Mammary epithelial cell (primary cell): ENCODE measurements at regions of chr10 and their contacts with region 1.

Region 1: GRCh38 chr10:104353325-104354048 is at the start of gene CFAP58:
- DNase-seq: peak; percentile 88
- H3K4me3 ChIP-seq: peak within 1 kb of the TSS; percentile 19 to 50 (median 45)
- H3K27ac ChIP-seq: no peak within 1 kb of the TSS
- H3K4me1 ChIP-seq: peaks cover 36% of the 10 kb centered on the region
- H3K27me3 ChIP-seq: no peaks in the 10 kb centered on the region
- CTCF ChIP-seq: peak; percentile 35 to 70
- total RNA-seq, gene CFAP58: 0.17 to 1.0 TPM

Region 2: DNA sequence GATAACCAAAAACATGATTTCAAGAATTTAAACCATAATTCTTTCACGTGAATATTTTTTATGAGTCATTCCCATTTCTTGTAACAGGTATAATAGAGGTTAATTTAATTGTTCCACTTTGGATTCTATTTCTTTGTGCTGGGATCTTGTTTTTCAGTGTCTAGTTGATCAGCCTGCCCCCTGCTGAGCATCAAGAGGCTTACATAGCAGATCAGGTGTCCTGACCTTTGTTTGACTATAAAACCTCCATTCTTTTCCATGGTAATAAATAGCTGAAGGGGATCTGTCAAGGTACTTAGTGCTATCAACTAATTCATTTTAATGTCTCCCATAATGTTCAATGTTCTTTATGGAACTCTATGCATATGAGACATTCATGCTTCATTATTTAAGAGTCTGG is 272.7 kb before region 1 on chr10:
- CTCF ChIA-PET with region 1: no interaction called
- dilution Hi-C with region 1: no loop called
- in situ Hi-C with region 1: no loop called
- intact Hi-C with region 1: loop called (anchors 2 kb)
- DNase-seq: no peak
- H3K4me3 ChIP-seq: peak overlapping the region; percentile 68 to 99 (median 96)
- H3K27ac ChIP-seq: peak overlapping the region; percentile 100
- H3K4me1 ChIP-seq: peaks cover 21% of the 10 kb centered on the region
- H3K27me3 ChIP-seq: no peaks in the 10 kb centered on the region
- CTCF ChIP-seq: peak; percentile 67 to 69

Region 3: GRCh38 chr10:104274762-104275721 is 78.4 kb before region 1 on chr10:
- CTCF ChIA-PET with region 1: interaction called, 6 read pairs
- dilution Hi-C with region 1: no loop called
- in situ Hi-C with region 1: no loop called
- intact Hi-C with region 1: loop called (anchors 1 kb)
- DNase-seq: peak; percentile 72
- H3K4me3 ChIP-seq: peak overlapping the region; percentile 56 to 74 (median 71)
- H3K27ac ChIP-seq: peak overlapping the region; percentile 58
- H3K4me1 ChIP-seq: peaks cover 10% of the 10 kb centered on the region
- H3K27me3 ChIP-seq: no peaks in the 10 kb centered on the region
- CTCF ChIP-seq: peak; percentile 88 to 96

Region 4: DNA sequence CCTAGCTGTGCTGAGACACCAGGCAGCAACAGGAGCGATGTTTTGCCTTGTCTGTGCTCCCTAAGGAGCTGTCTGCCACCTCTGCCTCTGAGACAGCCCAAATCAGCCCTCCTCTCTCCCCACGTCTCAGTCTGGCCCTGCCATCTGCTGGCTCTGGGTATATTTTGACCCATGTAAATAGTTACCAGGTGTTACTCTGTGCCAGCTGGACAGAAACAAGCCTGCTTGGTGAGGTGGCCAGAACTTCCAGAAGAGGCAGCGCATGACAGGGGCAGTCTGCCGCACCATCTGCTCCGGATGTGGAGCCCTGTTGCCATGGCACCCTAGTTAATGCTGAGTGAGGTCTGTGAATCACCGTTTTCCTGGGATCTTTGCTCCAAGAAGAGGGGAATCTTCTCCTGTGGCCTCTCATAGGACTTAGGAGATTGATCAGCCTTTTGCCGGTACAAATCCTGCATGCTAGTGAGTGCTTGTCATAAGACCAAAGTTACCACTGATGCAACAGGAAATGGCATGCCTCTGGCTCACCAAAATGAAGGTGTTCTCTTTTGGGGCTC is 52.7 kb before region 1 on chr10:
- CTCF ChIA-PET with region 1: no interaction called
- dilution Hi-C with region 1: loop called (anchors 5 kb)
- in situ Hi-C with region 1: loop called in 1 of 2 experiments (anchors 5 kb)
- intact Hi-C with region 1: loop called (anchors 1 kb)
- DNase-seq: peak; percentile 95
- H3K4me3 ChIP-seq: no peak overlapping the region
- H3K27ac ChIP-seq: peak overlapping the region; percentile 97
- H3K4me1 ChIP-seq: peaks cover 25% of the 10 kb centered on the region
- H3K27me3 ChIP-seq: no peaks in the 10 kb centered on the region
- CTCF ChIP-seq: peak; percentile 12 to 41

Region 5: GRCh38 chr10:104337974-104338735 is 15.3 kb before region 1 on chr10 and contains the start of gene ITPRIP:
- CTCF ChIA-PET with region 1: no interaction called
- dilution Hi-C with region 1: no loop called
- in situ Hi-C with region 1: no loop called
- intact Hi-C with region 1: loop called (anchors 1 kb)
- DNase-seq: peak; percentile 82
- H3K4me3 ChIP-seq: peak within 1 kb of the TSS; percentile 93 to 97 (median 95)
- H3K27ac ChIP-seq: peak within 1 kb of the TSS; percentile 97
- H3K4me1 ChIP-seq: peaks cover 33% of the 10 kb centered on the region
- H3K27me3 ChIP-seq: no peaks in the 10 kb centered on the region
- CTCF ChIP-seq: peak in 1 of 2 donors; percentile 22
- total RNA-seq, gene ITPRIP: 21.5 to 37.2 TPM

Region 6: DNA sequence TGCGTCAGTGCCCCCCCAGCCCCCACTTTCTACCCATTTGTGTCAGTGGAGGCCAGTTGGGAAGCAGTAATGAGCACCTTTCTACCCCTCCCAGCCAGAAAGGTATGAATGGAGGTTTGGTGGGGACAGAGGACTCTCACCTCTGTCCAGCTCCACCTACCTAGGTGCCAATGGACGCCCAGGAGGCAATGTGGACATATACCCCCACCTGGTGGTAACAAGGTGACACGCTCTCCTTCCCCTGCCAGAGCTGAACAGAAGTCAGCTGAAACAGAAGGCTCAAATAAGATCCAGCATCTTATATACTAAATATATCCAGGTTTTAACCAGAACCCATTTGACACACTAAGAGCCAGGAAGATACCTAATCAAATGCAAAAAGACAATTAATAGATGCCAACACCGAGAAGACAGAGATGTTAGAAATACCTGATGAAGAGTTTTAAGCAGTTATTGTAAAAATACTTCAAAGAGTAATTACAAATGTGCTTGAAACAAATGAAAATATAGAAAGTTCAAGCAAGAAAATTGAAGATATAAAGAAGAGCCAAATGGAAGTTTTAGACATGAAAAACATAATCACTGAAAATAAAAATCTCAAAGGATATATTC is 269.2 kb after region 1 on chr10:
- CTCF ChIA-PET with region 1: no interaction called
- dilution Hi-C with region 1: no loop called
- in situ Hi-C with region 1: no loop called
- intact Hi-C with region 1: loop called (anchors 2 kb)
- DNase-seq: peak; percentile 42
- H3K4me3 ChIP-seq: no peak overlapping the region
- H3K27ac ChIP-seq: no peak overlapping the region
- H3K4me1 ChIP-seq: no peaks in the 10 kb centered on the region
- H3K27me3 ChIP-seq: peaks cover 4% of the 10 kb centered on the region
- CTCF ChIP-seq: peak; percentile 86 to 94